ENCODE measurements at regions of chr12 and their contacts with region 1.

Region 1: GRCh38 chr12:57110104-57111030 is 795 bp downstream of the STAT6 start:
- DNase-seq: peak; percentile 63 to 89
- ATAC-seq: peak; percentile 34 to 47 (median 42)
- H3K4me3 ChIP-seq: peak overlapping the region; percentile 95
- H3K4me3 Mint-ChIP-seq: peak overlapping the region; percentile 98
- H3K27ac ChIP-seq: peak overlapping the region; percentile 97
- H3K27ac Mint-ChIP-seq: peak overlapping the region; percentile 88 to 95
- H3K4me1 ChIP-seq: peaks cover 35% of the 10 kb centered on the region
- H3K4me1 Mint-ChIP-seq: peaks cover 51 to 67% of the 10 kb centered on the region in 2 donors
- H3K27me3 ChIP-seq: no peaks in the 10 kb centered on the region
- H3K27me3 Mint-ChIP-seq: no peaks in the 10 kb centered on the region
- CTCF ChIP-seq: no peak

Region 2: DNA sequence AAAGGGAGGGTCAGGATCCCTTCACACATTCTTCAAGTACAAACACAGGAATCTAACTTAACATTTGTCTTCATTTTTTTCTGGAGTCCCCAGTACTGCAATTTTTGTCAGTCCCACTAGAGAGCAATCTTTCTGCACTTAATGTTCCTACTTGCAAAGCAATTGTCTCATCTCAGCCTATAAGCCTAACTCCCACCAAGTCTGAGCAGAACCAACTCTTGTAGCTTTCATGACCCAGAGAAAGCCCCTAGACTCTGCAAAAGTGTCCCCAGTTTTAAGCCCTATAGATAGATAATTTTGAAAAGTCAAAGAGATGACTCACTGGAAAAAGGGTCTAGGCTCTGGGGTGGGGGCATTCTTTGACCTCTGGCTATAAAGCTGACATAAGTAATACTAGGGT is 102.2 kb before region 1 on chr12:
- intact Hi-C with region 1: loop called (anchors 1 kb)
- DNase-seq: peak in 1 of 2 donors; percentile 74
- ATAC-seq: peak in 1 of 3 donors; percentile 27
- H3K4me3 ChIP-seq: no peak overlapping the region
- H3K4me3 Mint-ChIP-seq: peak overlapping the region; percentile 23
- H3K27ac ChIP-seq: no peak overlapping the region
- H3K27ac Mint-ChIP-seq: no peak overlapping the region
- H3K4me1 ChIP-seq: peaks cover 17% of the 10 kb centered on the region
- H3K4me1 Mint-ChIP-seq: peaks cover 27 to 33% of the 10 kb centered on the region in 2 donors
- H3K27me3 ChIP-seq: no peaks in the 10 kb centered on the region
- H3K27me3 Mint-ChIP-seq: peaks cover 6 to 8% of the 10 kb centered on the region in 2 donors
- CTCF ChIP-seq: peak; percentile 38

Region 3: DNA sequence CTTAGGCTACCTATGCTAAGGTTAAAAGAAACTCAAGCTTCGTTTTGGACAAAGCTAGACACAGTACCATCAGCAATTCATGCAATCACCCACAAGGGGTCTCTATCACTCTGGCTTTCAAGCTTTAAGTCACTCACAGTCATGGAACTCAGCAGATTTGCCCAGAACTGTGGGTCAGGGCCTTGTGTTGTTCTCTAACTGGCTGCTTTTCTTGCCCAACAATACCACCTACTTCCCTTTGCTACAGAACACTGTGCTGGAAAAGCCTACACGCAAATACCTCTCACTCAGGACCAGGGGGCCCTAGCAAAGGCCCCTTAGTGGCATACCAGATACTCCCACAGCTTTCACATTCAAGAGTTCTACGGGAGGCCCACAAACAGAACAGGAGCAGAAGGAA is 40.8 kb before region 1 on chr12:
- intact Hi-C with region 1: loop called (anchors 1 kb)
- DNase-seq: peak in 1 of 2 donors; percentile 88
- ATAC-seq: peak; percentile 99 to 100 (median 100)
- H3K4me3 ChIP-seq: no peak overlapping the region
- H3K4me3 Mint-ChIP-seq: no peak overlapping the region
- H3K27ac ChIP-seq: peak overlapping the region; percentile 23
- H3K27ac Mint-ChIP-seq: peak overlapping the region; percentile 66 to 89
- H3K4me1 ChIP-seq: peaks cover 4% of the 10 kb centered on the region
- H3K4me1 Mint-ChIP-seq: peaks cover 8 to 9% of the 10 kb centered on the region in 2 donors
- H3K27me3 ChIP-seq: no peaks in the 10 kb centered on the region
- H3K27me3 Mint-ChIP-seq: no peaks in the 10 kb centered on the region
- CTCF ChIP-seq: peak; percentile 86

Region 4: DNA sequence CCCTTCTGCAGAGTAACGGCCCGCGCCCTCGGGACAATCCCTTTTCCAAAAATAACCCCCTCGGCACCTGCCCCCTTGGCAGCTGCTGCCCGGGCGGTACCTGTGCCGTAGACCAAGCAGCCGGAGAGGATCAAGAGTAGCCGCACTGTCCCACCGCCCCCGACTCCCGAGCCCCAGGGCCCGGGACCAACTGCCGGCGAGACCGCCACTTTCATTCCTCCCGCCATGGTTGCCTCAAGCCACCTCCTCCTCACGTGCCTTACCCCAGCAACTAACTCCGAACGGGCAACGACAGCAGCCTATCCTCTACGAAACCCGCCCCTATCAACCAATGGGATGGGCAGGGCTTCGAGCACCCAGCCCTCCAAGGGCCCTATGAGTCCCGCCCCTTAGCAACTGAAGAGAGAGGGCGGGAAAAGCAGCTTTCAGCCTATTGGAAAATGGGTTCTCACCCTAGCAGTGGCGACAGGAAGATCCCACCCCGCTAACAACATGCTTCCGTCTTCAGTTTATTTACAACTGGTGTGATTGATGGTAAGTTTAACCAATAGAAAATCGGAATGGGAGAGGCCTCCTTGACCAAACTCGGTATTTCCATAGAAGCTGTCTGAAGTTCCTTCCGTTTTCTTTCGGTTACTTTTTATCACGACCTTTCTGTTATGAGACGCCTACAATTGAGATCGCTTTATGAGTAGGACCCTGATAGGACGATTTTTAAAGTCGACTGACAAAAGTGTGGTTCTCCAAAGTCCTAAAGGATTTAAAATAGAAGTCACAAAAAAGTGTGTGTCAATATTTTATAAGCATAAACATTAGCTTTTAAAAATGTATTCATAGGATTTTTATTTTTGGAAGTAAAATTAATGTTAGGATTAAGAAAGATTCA is 31.6 kb before region 1 on chr12 and contains the start of gene NEMP1:
- intact Hi-C with region 1: loop called (anchors 2 kb)
- DNase-seq: peak; percentile 90 to 99
- ATAC-seq: peak; percentile 94 to 99 (median 95)
- H3K4me3 ChIP-seq: peak within 1 kb of the TSS; percentile 63
- H3K4me3 Mint-ChIP-seq: peak within 1 kb of the TSS; percentile 100
- H3K27ac ChIP-seq: peak within 1 kb of the TSS; percentile 80
- H3K27ac Mint-ChIP-seq: peak within 1 kb of the TSS; percentile 97 to 99
- H3K4me1 ChIP-seq: peaks cover 12% of the 10 kb centered on the region
- H3K4me1 Mint-ChIP-seq: peaks cover 11 to 13% of the 10 kb centered on the region in 2 donors
- H3K27me3 ChIP-seq: no peaks in the 10 kb centered on the region
- H3K27me3 Mint-ChIP-seq: no peaks in the 10 kb centered on the region
- CTCF ChIP-seq: no peak
- total RNA-seq, gene NEMP1: 11.1 to 16.7 (median 12.1) TPM

Region 5: GRCh38 chr12:57088459-57089248 is 21.7 kb before region 1 on chr12 and contains the start of gene NAB2:
- intact Hi-C with region 1: loop called (anchors 2 kb)
- DNase-seq: peak; percentile 84 to 97
- ATAC-seq: peak; percentile 73 to 90 (median 81)
- H3K4me3 ChIP-seq: peak within 1 kb of the TSS; percentile 71
- H3K4me3 Mint-ChIP-seq: peak within 1 kb of the TSS; percentile 90
- H3K27ac ChIP-seq: peak within 1 kb of the TSS; percentile 100
- H3K27ac Mint-ChIP-seq: peak within 1 kb of the TSS; percentile 92 to 95
- H3K4me1 ChIP-seq: peaks cover 46% of the 10 kb centered on the region
- H3K4me1 Mint-ChIP-seq: peaks cover 25 to 42% of the 10 kb centered on the region in 2 donors
- H3K27me3 ChIP-seq: no peaks in the 10 kb centered on the region
- H3K27me3 Mint-ChIP-seq: no peaks in the 10 kb centered on the region
- CTCF ChIP-seq: no peak
- total RNA-seq, gene NAB2: 4.2 to 7.0 (median 5.4) TPM

Region 6: GRCh38 chr12:57175428-57176138 is 65.2 kb after region 1 on chr12:
- intact Hi-C with region 1: no loop called
- DNase-seq: peak; percentile 35 to 59
- ATAC-seq: peak in 2 of 3 donors; percentile 44 to 57
- H3K4me3 ChIP-seq: no peak overlapping the region
- H3K4me3 Mint-ChIP-seq: no peak overlapping the region
- H3K27ac ChIP-seq: no peak overlapping the region
- H3K27ac Mint-ChIP-seq: no peak overlapping the region
- H3K4me1 ChIP-seq: no peaks in the 10 kb centered on the region
- H3K4me1 Mint-ChIP-seq: peaks cover 0 to 5% of the 10 kb centered on the region in 2 donors
- H3K27me3 ChIP-seq: no peaks in the 10 kb centered on the region
- H3K27me3 Mint-ChIP-seq: no peaks in the 10 kb centered on the region
- CTCF ChIP-seq: peak; percentile 32

Region 7: DNA sequence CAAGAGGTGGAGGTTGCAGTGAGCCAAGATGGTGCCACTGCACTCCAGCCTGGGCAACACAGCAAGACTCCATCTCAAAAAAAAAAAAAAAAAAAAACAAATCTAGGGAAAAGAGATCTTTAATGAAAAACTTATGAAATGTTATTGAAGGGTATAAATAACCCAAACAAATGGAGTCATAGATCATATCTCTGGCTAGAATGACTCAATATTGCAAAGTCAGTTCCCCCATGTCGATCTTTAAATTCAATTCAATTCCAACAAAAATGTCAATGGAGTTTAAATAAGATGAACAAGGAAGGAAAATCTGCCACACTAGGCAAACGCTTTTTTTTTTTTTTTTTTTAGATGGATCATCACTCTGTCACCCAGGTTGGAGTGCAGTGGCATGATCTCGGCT is 241.8 kb after region 1 on chr12:
- intact Hi-C with region 1: no loop called
- DNase-seq: no peak
- ATAC-seq: no peak
- H3K4me3 ChIP-seq: no peak overlapping the region
- H3K4me3 Mint-ChIP-seq: no peak overlapping the region
- H3K27ac ChIP-seq: no peak overlapping the region
- H3K27ac Mint-ChIP-seq: no peak overlapping the region
- H3K4me1 ChIP-seq: no peaks in the 10 kb centered on the region
- H3K4me1 Mint-ChIP-seq: peaks cover 0 to 6% of the 10 kb centered on the region in 2 donors
- H3K27me3 ChIP-seq: no peaks in the 10 kb centered on the region
- H3K27me3 Mint-ChIP-seq: no peaks in the 10 kb centered on the region
- CTCF ChIP-seq: no peak